OCI-LY7 (cell line): ENCODE measurements at regions of chr12 and their contacts with region 1.

Region 1: DNA sequence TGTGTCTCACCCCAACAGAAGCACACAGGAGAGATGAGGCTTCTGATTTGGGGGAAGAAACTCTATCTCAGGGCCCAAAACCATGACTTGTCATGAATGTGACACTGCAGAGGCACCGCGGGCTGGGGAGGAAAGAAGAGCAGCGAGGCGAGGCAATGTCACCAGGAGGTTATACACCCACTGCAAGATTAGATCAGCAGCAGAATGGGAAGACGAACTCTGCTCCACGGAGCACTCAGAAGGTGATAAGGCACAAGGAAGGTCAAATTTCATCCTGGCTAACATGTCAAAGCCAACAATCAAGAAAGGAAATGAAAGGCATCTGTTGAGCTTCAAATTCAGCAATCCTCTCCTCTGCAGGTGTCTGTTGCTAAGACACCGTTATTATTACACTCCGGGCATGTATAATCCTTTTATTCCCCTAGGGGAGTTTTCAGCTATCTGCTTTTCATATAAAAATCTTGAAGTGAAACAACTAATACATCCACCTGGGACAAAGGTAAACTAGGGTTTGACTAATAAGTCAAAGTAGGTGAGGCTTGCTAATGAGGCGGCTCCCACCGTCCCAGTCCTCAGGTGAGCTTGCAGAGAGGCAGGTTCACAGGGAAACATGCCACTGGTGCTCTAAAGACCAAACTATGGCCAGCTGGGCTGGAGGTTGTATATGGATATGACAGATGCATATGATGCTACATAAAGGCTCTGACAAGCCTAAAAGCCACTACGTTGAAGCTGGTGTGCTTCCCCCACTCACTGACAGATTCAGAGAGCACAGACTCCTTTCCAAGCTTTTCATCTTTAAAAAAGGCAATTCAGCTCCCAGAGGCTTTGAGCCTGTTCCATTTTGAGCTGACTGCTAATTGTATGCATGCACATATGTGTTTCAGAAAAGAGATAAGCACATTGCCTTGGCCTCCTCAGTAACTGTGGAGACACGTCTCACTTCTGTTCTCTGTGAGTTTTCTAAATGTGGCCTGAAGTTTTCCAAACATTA is 221.2 kb downstream of the NELL2 start:
- DNase-seq: peak; percentile 58
- H3K4me3 ChIP-seq: no peak overlapping the region
- H3K27ac ChIP-seq: peak overlapping the region; percentile 74
- H3K4me1 ChIP-seq: peaks cover 44% of the 10 kb centered on the region
- CTCF ChIP-seq: no peak

Region 2: GRCh38 chr12:44674875-44675274 is 19.9 kb after region 1 on chr12:
- CTCF ChIA-PET with region 1: no interaction called
- POLR2A ChIA-PET with region 1: interaction called, 17 read pairs
- intact Hi-C with region 1: no loop called
- DNase-seq: no peak
- H3K4me3 ChIP-seq: no peak overlapping the region
- H3K27ac ChIP-seq: no peak overlapping the region
- H3K4me1 ChIP-seq: peaks cover 13% of the 10 kb centered on the region
- CTCF ChIP-seq: no peak

Region 3: DNA sequence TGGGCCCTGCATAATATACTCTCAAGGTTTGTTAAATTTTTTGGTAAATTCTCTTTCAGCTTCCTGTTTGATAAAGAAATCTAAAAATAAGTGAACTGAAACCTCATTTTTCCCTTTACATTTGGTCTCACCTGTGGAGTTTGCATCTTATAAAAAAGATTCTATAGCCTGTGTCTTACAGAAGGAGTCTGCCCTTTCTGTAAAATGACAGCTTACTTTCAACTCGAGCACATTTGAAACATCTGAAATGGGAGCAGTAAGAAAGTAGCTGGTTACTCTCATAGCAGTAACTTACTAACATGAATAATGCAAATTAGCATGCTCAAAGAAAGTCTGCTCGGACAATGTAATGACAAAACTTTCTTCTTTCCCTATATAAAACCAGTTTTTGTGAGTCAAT is 65.3 kb after region 1 on chr12:
- CTCF ChIA-PET with region 1: no interaction called
- POLR2A ChIA-PET with region 1: interaction called, 3 read pairs
- intact Hi-C with region 1: loop called (anchors 2 kb)
- DNase-seq: peak; percentile 23
- H3K4me3 ChIP-seq: no peak overlapping the region
- H3K27ac ChIP-seq: peak overlapping the region; percentile 56
- H3K4me1 ChIP-seq: peaks cover 29% of the 10 kb centered on the region
- CTCF ChIP-seq: no peak

Region 4: GRCh38 chr12:44847888-44848702 is 193.2 kb after region 1 on chr12:
- CTCF ChIA-PET with region 1: no interaction called
- POLR2A ChIA-PET with region 1: no interaction called
- intact Hi-C with region 1: loop called (anchors 10 kb)
- DNase-seq: peak; percentile 90
- H3K4me3 ChIP-seq: peak overlapping the region; percentile 55
- H3K27ac ChIP-seq: peak overlapping the region; percentile 97
- H3K4me1 ChIP-seq: peaks cover 56% of the 10 kb centered on the region
- CTCF ChIP-seq: no peak